Activated B cell treated with CpG ODN at 0.5 μM for 24 hours (primary cell): ENCODE measurements at regions of chr17 and their contacts with region 1.

Region 1: GRCh38 chr17:30344283-30345088 is 10.6 kb upstream of the TMIGD1 start:
- DNase-seq: no peak
- ATAC-seq: no peak
- H3K4me3 Mint-ChIP-seq: no peak overlapping the region
- H3K27ac Mint-ChIP-seq: no peak overlapping the region
- H3K4me1 Mint-ChIP-seq: peaks cover 6% of the 10 kb centered on the region
- H3K27me3 Mint-ChIP-seq: peaks cover 2% of the 10 kb centered on the region
- CTCF ChIP-seq: no peak

Region 2: GRCh38 chr17:30354701-30355100 is 10.2 kb after region 1 on chr17:
- CTCF ChIA-PET with region 1: no interaction called
- POLR2A ChIA-PET with region 1: no interaction called
- intact Hi-C with region 1: no loop called
- DNase-seq: no peak
- ATAC-seq: no peak
- H3K4me3 Mint-ChIP-seq: no peak overlapping the region
- H3K27ac Mint-ChIP-seq: no peak overlapping the region
- H3K4me1 Mint-ChIP-seq: no peaks in the 10 kb centered on the region
- H3K27me3 Mint-ChIP-seq: no peaks in the 10 kb centered on the region
- CTCF ChIP-seq: no peak

Region 3: GRCh38 chr17:30426292-30426691 is 81.8 kb after region 1 on chr17:
- CTCF ChIA-PET with region 1: no interaction called
- POLR2A ChIA-PET with region 1: no interaction called
- intact Hi-C with region 1: no loop called
- DNase-seq: no peak
- ATAC-seq: no peak
- H3K4me3 Mint-ChIP-seq: no peak overlapping the region
- H3K27ac Mint-ChIP-seq: no peak overlapping the region
- H3K4me1 Mint-ChIP-seq: no peaks in the 10 kb centered on the region
- H3K27me3 Mint-ChIP-seq: no peaks in the 10 kb centered on the region
- CTCF ChIP-seq: no peak

Region 4: DNA sequence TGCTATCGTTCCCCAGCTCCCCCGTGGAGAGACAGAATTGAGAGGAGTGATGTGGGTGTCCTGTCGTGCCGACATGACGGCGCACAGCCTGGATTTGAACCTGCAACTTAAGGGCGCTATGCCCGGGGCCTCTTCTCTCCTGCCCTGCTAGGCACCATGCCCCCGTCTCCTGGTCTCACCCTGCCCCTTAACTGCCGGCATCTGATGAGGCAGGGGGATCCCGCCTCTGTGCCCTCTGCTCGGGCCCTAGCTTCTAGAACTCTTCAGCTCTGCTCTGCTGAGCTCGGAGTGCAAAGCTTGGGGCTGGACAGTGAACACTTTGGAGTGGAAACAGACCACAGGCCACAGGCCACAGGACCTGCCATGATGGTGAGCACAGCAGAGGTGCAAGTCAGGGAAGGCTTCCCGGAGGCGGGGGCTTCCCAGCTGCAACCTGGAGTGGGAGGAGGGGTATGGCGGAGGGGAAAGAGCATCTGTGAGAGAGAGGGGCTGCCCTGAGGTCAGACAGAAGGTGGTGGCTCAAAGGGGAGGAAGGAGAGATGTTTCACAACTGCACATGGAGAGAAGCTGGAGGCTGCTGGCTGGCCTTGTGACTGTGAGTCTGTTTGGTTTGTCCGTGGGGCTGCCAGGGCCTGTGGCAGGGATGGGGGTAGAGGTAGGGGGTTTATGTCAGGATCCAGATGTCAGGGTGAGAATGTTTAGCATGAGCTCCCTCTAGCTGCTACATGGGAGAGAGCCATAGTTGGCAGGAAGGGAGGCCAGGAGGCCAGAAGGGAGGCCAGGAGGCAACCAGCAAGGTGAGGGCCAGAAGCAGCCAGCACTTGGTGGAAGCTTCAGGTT is 372.2 kb after region 1 on chr17:
- CTCF ChIA-PET with region 1: interaction called, 3 read pairs
- POLR2A ChIA-PET with region 1: no interaction called
- intact Hi-C with region 1: loop called (anchors 5 kb)
- DNase-seq: no peak
- ATAC-seq: no peak
- H3K4me3 Mint-ChIP-seq: no peak overlapping the region
- H3K27ac Mint-ChIP-seq: no peak overlapping the region
- H3K4me1 Mint-ChIP-seq: peaks cover 11% of the 10 kb centered on the region
- H3K27me3 Mint-ChIP-seq: no peaks in the 10 kb centered on the region
- CTCF ChIP-seq: no peak

Region 5: DNA sequence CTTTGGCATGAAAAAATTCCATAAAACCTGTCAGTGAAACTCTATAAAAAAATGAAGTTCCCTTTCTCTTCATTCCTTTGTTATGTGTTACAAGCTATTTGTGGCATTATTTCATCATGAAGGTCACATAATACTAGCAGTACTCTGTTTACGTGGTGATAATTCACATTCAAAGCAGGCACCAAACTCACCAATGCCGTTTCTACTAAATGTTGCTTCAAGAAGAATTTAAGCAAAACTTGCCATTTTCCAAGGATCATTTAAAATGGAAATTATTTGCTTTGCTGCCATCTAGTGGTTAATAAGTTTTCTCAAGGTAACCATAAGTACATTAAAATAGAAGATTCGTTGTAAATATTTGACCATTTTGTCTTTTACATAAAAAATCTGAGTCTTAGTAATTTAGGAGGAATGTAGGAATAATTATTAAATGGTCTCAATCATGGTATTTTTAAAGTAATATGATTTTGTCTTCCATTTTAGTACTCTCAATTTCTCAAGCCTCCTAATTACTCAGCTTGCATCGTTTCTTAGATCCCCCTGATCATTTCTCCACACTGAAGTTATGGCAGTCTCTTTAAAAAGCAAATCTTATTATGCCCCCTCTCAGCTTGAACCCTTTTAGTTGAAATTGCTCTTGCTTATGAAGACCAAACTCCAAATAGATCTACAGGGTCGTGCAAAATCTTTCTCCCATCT is 871.7 kb after region 1 on chr17:
- CTCF ChIA-PET with region 1: interaction called, 3 read pairs
- POLR2A ChIA-PET with region 1: no interaction called
- intact Hi-C with region 1: loop called (anchors 5 kb)
- DNase-seq: no peak
- ATAC-seq: no peak
- H3K4me3 Mint-ChIP-seq: no peak overlapping the region
- H3K27ac Mint-ChIP-seq: no peak overlapping the region
- H3K4me1 Mint-ChIP-seq: no peaks in the 10 kb centered on the region
- H3K27me3 Mint-ChIP-seq: no peaks in the 10 kb centered on the region
- CTCF ChIP-seq: peak; percentile 72